Endothelial cell of umbilical vein (primary cell): ENCODE measurements at regions of chr2 and their contacts with region 1.

Region 1: GRCh38 chr2:27281855-27282559 is at the start of gene TRIM54:
- DNase-seq: no peak
- H3K4me3 ChIP-seq: no peak within 1 kb of the TSS
- H3K27ac ChIP-seq: no peak within 1 kb of the TSS
- H3K4me1 ChIP-seq: peaks cover 6% of the 10 kb centered on the region
- H3K27me3 ChIP-seq: no peaks in the 10 kb centered on the region
- CTCF ChIP-seq: no peak
- POLR2A ChIP-seq: no peak
- total RNA-seq, gene TRIM54: 0.42 and 0.51 TPM in 2 replicates

Region 2: GRCh38 chr2:26959331-26959730 is 322.7 kb before region 1 on chr2:
- CTCF ChIA-PET with region 1: interaction called, 10 read pairs
- POLR2A ChIA-PET with region 1: no interaction called
- dilution Hi-C with region 1: no loop called
- intact Hi-C with region 1: loop called (anchors 10 kb)
- DNase-seq: no peak
- H3K4me3 ChIP-seq: no peak overlapping the region
- H3K27ac ChIP-seq: no peak overlapping the region
- H3K4me1 ChIP-seq: no peaks in the 10 kb centered on the region
- H3K27me3 ChIP-seq: peaks cover 19 to 33% of the 10 kb centered on the region in 2 experiments
- CTCF ChIP-seq: no peak
- POLR2A ChIP-seq: no peak

Region 3: DNA sequence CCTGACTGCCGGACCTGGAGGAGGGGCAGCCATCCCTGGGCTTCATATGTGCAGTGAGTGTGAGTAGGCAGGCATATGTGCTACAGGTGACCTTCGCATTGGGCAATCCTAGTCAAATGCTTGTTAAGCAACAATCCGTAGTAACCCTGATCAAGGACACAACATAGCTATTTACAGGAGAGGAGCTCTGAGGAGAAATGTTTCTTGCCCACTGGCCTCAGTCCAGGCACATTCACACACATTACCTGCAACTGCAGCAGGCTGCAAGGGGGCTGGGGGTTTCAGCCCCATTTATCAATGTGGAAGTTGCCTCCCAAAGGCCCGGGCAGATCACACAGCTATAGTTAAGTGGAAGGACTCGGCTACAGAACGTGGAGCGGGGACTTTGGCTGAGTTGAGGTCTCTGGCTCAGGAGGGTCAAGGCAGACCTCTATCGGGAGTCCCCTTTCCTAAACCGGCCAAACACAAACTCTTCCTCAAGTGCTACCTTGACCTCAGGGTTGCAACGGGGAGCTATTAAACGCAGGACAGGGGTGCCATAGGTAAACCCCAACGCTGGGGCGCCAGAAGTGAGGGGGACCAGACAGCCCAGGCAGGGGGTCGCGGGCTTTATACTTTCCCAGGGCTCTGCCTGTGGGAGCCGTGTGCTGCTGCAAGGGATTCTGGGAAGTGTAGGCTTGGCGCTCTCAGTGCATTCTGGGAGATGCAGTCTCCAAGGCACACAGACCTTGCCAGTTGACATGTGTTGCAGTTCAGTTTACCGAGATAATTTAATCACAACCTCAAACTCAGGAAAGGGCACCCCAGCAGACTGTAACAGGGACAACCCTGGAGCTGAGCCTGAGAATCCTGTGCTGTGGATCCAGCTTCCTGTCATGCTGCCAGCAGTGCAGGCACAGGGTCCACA is 186.0 kb before region 1 on chr2:
- CTCF ChIA-PET with region 1: interaction called, 67 read pairs
- POLR2A ChIA-PET with region 1: no interaction called
- dilution Hi-C with region 1: no loop called
- intact Hi-C with region 1: loop called (anchors 1 kb)
- DNase-seq: peak; percentile 71
- H3K4me3 ChIP-seq: peak overlapping the region in 1 of 3 experiments; percentile 8
- H3K27ac ChIP-seq: no peak overlapping the region
- H3K4me1 ChIP-seq: no peaks in the 10 kb centered on the region
- H3K27me3 ChIP-seq: no peaks in the 10 kb centered on the region
- CTCF ChIP-seq: no peak
- POLR2A ChIP-seq: peak; percentile 63

Region 4: GRCh38 chr2:27191053-27191829 is 90.8 kb before region 1 on chr2:
- CTCF ChIA-PET with region 1: interaction called, 17 read pairs
- POLR2A ChIA-PET with region 1: no interaction called
- dilution Hi-C with region 1: no loop called
- intact Hi-C with region 1: no loop called
- DNase-seq: peak; percentile 73
- H3K4me3 ChIP-seq: no peak overlapping the region
- H3K27ac ChIP-seq: no peak overlapping the region
- H3K4me1 ChIP-seq: no peaks in the 10 kb centered on the region
- H3K27me3 ChIP-seq: peaks cover 2 to 3% of the 10 kb centered on the region in 2 experiments
- CTCF ChIP-seq: peak; percentile 48 to 65
- POLR2A ChIP-seq: no peak

Region 5: DNA sequence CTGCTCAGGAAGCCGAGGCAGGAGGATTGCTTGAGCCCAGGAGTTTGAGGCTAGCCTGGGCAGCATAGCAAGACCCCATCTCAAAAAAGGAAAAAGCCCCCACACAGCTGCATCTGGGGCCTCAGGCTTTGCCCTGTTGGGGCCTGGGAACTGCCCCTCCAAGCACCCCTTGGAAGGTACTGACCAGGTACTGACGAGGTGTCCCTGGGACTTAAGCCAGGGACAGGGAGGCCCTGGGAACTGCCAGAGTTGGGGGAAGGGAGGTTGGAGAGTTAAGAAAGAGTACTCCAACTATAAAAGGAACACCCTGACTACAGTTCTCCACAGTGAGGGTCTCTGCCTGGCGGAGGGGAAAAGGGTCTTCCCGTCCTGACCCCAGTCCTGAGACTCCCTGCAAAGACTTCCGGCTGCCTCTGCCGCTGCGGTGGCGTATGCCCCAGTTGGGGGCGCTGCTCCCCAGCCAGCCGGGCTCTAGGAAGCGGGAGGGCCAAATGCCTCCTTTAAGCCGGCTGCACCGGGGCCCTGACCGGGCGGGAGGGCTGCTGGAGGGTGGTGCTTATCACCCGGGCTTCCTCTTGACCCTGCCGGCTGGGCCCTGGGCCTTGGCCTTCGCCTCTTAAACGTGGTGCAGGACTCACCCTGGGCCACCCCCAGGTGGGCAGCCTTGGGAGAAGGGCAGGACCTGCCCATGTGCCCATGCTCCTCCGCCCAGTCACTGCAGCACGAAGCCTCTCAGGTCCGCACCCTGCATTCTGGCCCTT is 31.9 kb before region 1 on chr2:
- CTCF ChIA-PET with region 1: interaction called, 81 read pairs
- POLR2A ChIA-PET with region 1: no interaction called
- dilution Hi-C with region 1: no loop called
- intact Hi-C with region 1: loop called (anchors 1 kb)
- DNase-seq: peak; percentile 64
- H3K4me3 ChIP-seq: no peak overlapping the region
- H3K27ac ChIP-seq: no peak overlapping the region
- H3K4me1 ChIP-seq: peaks cover 15% of the 10 kb centered on the region
- H3K27me3 ChIP-seq: no peaks in the 10 kb centered on the region
- CTCF ChIP-seq: peak; percentile 83 to 89
- POLR2A ChIP-seq: no peak

Region 6: GRCh38 chr2:27271631-27272340 is 10.2 kb before region 1 on chr2:
- CTCF ChIA-PET with region 1: interaction called, 143 read pairs
- POLR2A ChIA-PET with region 1: interaction called, 8 read pairs
- dilution Hi-C with region 1: no loop called
- intact Hi-C with region 1: no loop called
- DNase-seq: no peak
- H3K4me3 ChIP-seq: no peak overlapping the region
- H3K27ac ChIP-seq: no peak overlapping the region
- H3K4me1 ChIP-seq: no peaks in the 10 kb centered on the region
- H3K27me3 ChIP-seq: peaks cover 8% of the 10 kb centered on the region in 2 experiments
- CTCF ChIP-seq: no peak
- POLR2A ChIP-seq: no peak